Activated CD4-positive, alpha-beta T cell treated with anti-CD3 and anti-CD28 coated beads for 36 hours (primary cell): ENCODE measurements at regions of chr6 and their contacts with region 1.

Region 1: GRCh38 chr6:155174576-155175211 is 89.1 kb upstream of the CLDN20 start:
- DNase-seq: peak; percentile 77
- ATAC-seq: peak; percentile 58
- H3K4me3 Mint-ChIP-seq: no peak overlapping the region
- H3K27ac Mint-ChIP-seq: peak overlapping the region; percentile 73
- H3K4me1 Mint-ChIP-seq: peaks cover 50% of the 10 kb centered on the region
- H3K27me3 Mint-ChIP-seq: no peaks in the 10 kb centered on the region

Region 2: DNA sequence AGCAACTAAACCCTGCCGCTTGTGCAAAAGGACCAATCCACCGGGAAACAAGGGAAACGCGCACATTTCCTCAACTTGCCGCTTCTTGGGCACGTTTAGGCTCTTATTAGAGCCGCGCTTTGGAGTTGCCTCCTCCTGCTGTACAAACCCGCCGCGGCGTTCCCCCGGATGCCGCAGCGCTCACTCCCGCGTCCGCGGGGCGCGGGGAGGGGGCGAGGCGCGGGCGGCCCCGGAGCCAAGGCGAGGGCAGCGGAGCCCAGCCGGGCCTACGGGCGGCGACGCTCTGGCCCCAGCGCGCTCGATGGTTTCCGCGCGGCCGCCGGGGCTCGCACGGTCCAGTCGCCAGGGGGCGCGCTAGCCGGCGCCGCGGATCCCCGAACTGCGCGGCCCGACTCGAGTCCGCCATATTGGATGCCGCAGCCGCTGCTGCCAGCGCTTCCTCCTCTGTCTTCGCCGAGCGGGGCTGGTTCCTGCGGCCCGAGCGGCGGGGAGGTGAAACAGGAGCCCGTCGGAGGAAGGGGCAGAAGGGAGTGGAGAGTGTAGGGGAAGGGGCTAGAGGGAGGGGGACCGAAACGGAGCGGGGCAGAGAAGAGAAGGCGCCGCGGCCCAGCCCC is 441.6 kb before region 1 on chr6 and contains the start of gene SCAF8:
- CTCF ChIA-PET with region 1: no interaction called
- POLR2A ChIA-PET with region 1: no interaction called
- intact Hi-C with region 1: loop called in 1 of 2 experiments (anchors 5 kb)
- DNase-seq: peak; percentile 90
- ATAC-seq: peak; percentile 78
- H3K4me3 Mint-ChIP-seq: peak within 1 kb of the TSS; percentile 86
- H3K27ac Mint-ChIP-seq: peak within 1 kb of the TSS; percentile 94
- H3K4me1 Mint-ChIP-seq: peaks cover 42% of the 10 kb centered on the region
- H3K27me3 Mint-ChIP-seq: no peaks in the 10 kb centered on the region
- total RNA-seq, gene SCAF8: 33.9 to 44.5 TPM

Region 3: DNA sequence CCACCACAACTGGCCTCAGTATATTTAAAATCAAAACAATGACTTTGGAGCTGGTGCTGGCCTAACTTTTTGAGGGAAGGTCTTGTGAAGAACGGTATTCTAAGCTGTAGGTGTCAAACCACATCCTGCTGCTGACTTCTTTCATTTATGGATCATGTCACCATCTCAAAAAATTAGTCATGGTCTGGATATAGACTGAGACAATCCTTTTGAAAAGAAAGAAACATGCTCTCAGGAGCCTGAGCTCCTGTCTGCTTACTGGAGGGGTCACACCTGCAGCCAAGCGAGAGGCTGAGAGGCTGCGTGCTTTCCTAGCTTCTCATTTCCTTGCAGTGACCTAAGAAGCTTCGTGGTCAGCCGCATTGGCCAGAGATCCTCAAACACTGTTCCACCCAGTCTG is 124.4 kb before region 1 on chr6:
- CTCF ChIA-PET with region 1: interaction called, 3 read pairs
- POLR2A ChIA-PET with region 1: interaction called, 5 read pairs
- intact Hi-C with region 1: loop called (anchors 1 kb)
- DNase-seq: peak; percentile 66
- ATAC-seq: peak; percentile 98
- H3K4me3 Mint-ChIP-seq: peak overlapping the region; percentile 37
- H3K27ac Mint-ChIP-seq: peak overlapping the region; percentile 91
- H3K4me1 Mint-ChIP-seq: peaks cover 30% of the 10 kb centered on the region
- H3K27me3 Mint-ChIP-seq: peaks cover 3% of the 10 kb centered on the region

Region 4: GRCh38 chr6:155188707-155189496 is 14.2 kb after region 1 on chr6:
- CTCF ChIA-PET with region 1: interaction called, 10 read pairs
- POLR2A ChIA-PET with region 1: interaction called, 3 read pairs
- intact Hi-C with region 1: loop called (anchors 1 kb)
- DNase-seq: no peak
- ATAC-seq: peak; percentile 16
- H3K4me3 Mint-ChIP-seq: no peak overlapping the region
- H3K27ac Mint-ChIP-seq: peak overlapping the region; percentile 55
- H3K4me1 Mint-ChIP-seq: peaks cover 48% of the 10 kb centered on the region
- H3K27me3 Mint-ChIP-seq: no peaks in the 10 kb centered on the region

Region 5: GRCh38 chr6:155273431-155273830 is 98.7 kb after region 1 on chr6:
- CTCF ChIA-PET with region 1: interaction called, 8 read pairs
- POLR2A ChIA-PET with region 1: no interaction called
- intact Hi-C with region 1: loop called (anchors 1 to 5 kb)
- DNase-seq: no peak
- ATAC-seq: no peak
- H3K4me3 Mint-ChIP-seq: no peak overlapping the region
- H3K27ac Mint-ChIP-seq: no peak overlapping the region
- H3K4me1 Mint-ChIP-seq: peaks cover 6% of the 10 kb centered on the region
- H3K27me3 Mint-ChIP-seq: no peaks in the 10 kb centered on the region

Region 6: GRCh38 chr6:155340464-155341129 is 165.9 kb after region 1 on chr6:
- CTCF ChIA-PET with region 1: no interaction called
- POLR2A ChIA-PET with region 1: no interaction called
- intact Hi-C with region 1: no loop called
- DNase-seq: no peak
- ATAC-seq: no peak
- H3K4me3 Mint-ChIP-seq: no peak overlapping the region
- H3K27ac Mint-ChIP-seq: no peak overlapping the region
- H3K4me1 Mint-ChIP-seq: peaks cover 21% of the 10 kb centered on the region
- H3K27me3 Mint-ChIP-seq: no peaks in the 10 kb centered on the region

Region 7: DNA sequence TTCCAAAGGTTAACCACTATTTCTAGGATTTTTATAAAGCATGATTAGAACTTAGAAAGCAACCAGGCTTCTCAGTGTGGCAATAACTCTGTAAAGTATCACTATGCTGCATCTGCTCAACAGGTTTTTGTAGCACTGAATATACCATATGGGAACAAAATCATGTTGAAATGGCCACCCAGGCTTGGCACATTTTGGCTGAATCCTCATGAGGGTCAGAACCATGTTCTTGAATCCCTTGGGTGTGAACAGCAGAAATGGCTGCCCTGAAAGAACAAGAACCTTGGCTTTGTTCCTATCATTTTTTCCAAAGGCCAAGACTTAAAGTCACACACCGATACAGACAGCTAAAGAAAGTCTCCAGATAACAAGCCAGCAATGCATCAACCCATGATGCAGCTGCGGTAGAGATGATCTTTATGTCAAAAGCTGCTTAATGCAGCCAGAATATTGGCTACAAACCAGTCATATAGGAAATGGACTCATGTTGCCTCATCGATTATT is 564.0 kb after region 1 on chr6:
- CTCF ChIA-PET with region 1: no interaction called
- POLR2A ChIA-PET with region 1: no interaction called
- intact Hi-C with region 1: no loop called
- DNase-seq: no peak
- ATAC-seq: no peak
- H3K4me3 Mint-ChIP-seq: no peak overlapping the region
- H3K27ac Mint-ChIP-seq: no peak overlapping the region
- H3K4me1 Mint-ChIP-seq: no peaks in the 10 kb centered on the region
- H3K27me3 Mint-ChIP-seq: no peaks in the 10 kb centered on the region

Region 8: DNA sequence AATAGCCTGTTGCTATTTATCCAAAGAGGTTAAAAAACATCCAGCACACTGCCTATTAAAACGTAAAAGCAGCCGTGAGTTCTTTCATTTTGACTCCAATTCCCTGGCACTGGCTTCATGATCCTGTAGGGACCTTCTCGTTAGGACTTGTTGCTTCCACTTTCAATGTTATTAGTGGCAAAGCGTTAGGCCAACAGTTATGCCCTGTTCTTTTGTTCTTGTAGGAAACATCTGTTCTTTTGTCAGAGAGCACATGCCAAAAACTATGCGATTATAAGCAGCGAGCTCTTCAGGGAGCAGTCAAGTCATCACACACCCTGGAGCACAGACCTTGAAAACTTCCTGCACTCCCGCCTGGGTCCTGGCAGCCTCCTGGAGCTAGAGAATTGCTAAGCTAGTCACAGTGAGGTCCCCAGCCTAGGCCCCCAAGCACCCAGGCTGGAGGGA is 993.0 kb after region 1 on chr6:
- CTCF ChIA-PET with region 1: no interaction called
- POLR2A ChIA-PET with region 1: no interaction called
- intact Hi-C with region 1: loop called in 1 of 2 experiments (anchors 5 kb)
- DNase-seq: no peak
- ATAC-seq: peak; percentile 47
- H3K4me3 Mint-ChIP-seq: peak overlapping the region; percentile 60
- H3K27ac Mint-ChIP-seq: peak overlapping the region; percentile 88
- H3K4me1 Mint-ChIP-seq: peaks cover 57% of the 10 kb centered on the region
- H3K27me3 Mint-ChIP-seq: no peaks in the 10 kb centered on the region